ENCODE measurements at regions of chr11 and their contacts with region 1.

Region 1: DNA sequence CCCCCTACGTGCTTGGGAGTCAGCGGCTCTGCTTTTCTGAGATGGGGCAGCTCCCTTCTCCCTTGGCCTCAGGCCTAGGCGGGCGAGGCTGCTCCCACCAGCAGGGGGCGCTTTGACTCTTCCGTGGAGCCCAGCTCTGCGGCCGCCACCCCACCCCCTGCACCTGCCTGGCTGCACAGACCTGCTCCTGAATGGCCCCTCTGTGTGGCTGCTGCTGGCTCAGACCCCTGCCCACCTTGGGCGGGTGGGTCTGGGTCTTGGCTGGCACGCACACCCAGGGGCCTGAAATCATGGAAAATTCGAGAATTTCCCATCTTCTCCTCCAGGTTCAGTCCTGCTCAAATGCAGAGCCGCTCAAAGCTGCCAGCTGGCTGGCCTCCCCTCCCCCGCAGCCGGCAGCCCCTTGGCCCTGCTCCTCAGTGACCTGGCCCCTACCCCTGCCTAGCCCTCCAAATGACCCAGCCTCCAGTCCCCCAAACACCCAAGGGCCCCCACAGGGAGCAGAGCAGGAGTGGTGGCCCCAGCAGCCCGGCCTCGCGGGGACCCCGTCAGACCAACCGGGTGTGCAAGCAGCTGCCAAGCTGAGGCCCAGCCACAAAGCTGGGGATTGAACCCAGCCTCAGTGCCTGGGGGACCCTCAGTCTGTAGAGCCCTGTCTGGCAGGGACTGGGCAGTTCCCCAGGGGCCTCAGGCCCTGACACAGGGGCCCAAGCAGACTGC is 9.0 kb downstream of the PRR33 start:
- DNase-seq: no peak
- H3K4me3 ChIP-seq: no peak overlapping the region
- H3K27me3 ChIP-seq: no peaks in the 10 kb centered on the region; the same call in none of the 2 replicates
- CTCF ChIP-seq: peak; percentile 94

Region 2: GRCh38 chr11:1796413-1797011 is 86.2 kb before region 1 on chr11:
- CTCF ChIA-PET with region 1: no interaction called
- POLR2A ChIA-PET with region 1: no interaction called
- DNase-seq: no peak
- H3K4me3 ChIP-seq: no peak overlapping the region
- H3K27me3 ChIP-seq: peaks cover 7% of the 10 kb centered on the region; the same call in 1 of the 2 replicates
- CTCF ChIP-seq: no peak

Region 3: DNA sequence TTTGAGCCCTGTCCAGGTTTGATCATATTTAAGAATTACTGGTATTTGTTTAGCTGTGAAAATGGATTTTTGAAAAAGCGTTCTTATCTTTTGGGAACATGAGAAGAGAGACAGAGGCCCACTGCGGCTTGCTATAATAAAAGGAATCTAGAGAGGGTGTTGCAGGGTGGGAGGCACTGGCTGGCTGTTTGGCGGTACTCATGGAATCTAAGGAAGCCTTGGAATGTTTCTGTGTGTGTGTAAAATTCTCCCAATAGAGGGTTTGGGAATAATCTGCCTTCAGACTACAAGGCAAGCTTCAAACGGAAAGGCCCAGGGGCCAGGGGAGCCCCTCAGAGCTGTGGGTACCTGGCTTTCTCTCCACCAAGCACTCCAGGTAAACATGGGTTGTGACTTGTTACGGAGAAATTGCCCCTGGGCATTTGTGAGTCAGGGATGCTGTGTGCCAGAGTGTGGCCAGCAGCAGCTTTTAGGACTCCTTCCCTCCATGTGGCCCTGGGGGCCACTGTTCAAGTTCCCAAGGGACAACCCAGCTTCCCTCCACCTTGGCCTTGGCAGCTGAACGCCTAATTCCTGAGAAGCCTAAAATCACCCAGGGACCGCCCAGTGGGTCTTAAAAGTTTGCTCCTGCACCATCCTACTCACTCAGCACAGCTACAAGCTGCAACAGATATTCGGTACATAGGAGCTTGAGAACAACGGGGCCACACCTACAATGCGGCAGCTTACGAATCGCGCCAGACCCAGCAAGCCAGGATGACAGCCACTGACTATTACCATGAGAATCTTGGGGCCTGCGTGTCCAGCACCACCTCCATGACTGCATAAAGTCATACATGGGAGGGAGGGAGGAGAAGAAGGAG is 62.0 kb before region 1 on chr11:
- CTCF ChIA-PET with region 1: no interaction called
- POLR2A ChIA-PET with region 1: no interaction called
- DNase-seq: no peak
- H3K4me3 ChIP-seq: no peak overlapping the region
- H3K27me3 ChIP-seq: peaks cover 3% of the 10 kb centered on the region; the same call in 1 of the 2 replicates
- CTCF ChIP-seq: no peak

Region 4: GRCh38 chr11:1870721-1871466 is 11.8 kb before region 1 on chr11:
- CTCF ChIA-PET with region 1: interaction called, 10 read pairs
- POLR2A ChIA-PET with region 1: no interaction called
- DNase-seq: no peak
- H3K4me3 ChIP-seq: no peak overlapping the region
- H3K27me3 ChIP-seq: peaks cover 2% of the 10 kb centered on the region; the same call in 1 of the 2 replicates
- CTCF ChIP-seq: no peak

Region 5: DNA sequence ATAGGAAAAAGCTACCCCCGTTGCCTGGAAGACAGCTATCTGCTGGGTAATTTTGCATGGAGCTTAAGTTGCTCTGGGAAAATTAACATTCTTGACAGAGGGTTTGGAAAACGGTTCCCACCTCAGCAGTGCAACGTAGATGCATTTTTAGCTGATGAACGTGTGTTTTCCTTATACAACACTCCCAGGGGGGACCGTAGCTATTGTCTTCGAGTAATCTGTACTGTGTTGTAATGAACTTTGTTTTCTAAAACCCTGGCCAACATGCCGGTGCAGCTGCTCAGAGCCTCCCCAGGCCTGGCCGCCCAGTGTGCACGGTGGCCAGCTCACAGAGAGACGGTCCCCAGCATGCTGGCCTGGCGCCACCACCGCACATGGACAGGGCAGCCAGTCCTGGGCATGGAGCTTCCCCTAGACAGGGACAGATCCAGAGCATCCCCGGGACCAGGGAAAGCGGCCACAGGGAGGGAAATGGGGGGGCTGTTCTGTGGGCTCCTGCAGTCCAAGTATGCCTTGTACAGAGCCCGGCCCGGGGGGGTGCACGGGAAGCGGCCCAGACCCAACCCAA is 39.0 kb after region 1 on chr11:
- CTCF ChIA-PET with region 1: interaction called, 20 read pairs
- POLR2A ChIA-PET with region 1: no interaction called
- DNase-seq: no peak
- H3K4me3 ChIP-seq: no peak overlapping the region
- H3K27me3 ChIP-seq: no peaks in the 10 kb centered on the region; the same call in 1 of the 2 replicates
- CTCF ChIP-seq: no peak

Region 6: GRCh38 chr11:1946812-1947484 is 64.3 kb after region 1 on chr11 and contains the start of gene MRPL23:
- CTCF ChIA-PET with region 1: interaction called, 22 read pairs
- POLR2A ChIA-PET with region 1: no interaction called
- DNase-seq: no peak
- H3K4me3 ChIP-seq: no peak within 1 kb of the TSS
- H3K27me3 ChIP-seq: no peaks in the 10 kb centered on the region
- CTCF ChIP-seq: no peak
- polyA plus RNA-seq, gene MRPL23: 39.8 and 43.5 TPM in 2 replicates